Activated CD4-positive, alpha-beta T cell treated with anti-CD3 and anti-CD28 coated beads for 36 hours (primary cell): ENCODE measurements at regions of chr4 and their contacts with region 1.

Region 1: DNA sequence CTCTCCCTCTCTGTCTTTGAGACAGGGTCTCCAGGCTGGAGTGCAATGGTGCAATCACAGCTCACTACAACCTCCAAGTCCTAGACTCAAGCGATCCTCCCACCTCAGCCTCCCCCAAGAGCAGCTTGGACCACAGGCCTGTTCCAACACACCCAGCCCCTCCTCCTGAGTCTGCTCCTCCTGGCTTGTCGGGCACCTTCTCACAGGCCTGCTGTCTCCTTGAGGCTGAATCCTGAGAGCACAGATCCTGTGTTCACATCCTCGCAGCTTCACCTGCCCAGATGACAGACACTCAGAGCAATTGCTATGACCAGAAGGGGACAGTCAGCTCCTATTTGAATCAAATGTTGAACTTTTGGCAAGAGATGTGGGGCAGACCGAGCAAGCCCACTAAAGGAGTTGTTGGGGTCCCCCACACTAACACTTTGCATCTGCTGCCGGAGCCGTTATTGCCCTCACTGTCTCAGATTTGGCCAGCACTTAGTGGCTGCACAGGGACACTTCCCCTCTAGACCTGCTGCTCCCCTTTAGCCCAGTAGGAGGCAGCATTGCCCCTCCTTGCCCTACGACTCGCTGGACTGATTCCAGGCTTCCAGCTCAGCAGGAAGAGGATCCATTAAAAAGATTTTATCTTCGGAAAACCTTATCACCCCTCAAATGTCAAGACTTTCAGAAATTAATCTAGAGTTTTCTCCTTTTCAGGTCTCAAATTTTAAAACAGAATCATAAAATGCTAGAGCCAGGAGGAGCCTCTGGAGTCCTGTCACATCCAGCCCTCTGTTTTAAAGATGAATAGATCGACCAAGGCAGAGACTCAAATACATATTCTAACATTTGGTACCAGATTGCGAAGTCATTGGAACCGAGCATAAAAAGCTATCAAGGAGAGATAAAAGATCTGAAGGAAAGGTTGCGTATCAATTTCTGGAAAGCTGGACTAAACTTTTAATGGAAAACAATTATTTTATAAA is 113.7 kb downstream of the USP46 start:
- DNase-seq: peak; percentile 76
- ATAC-seq: peak; percentile 61
- H3K4me3 Mint-ChIP-seq: no peak overlapping the region
- H3K27ac Mint-ChIP-seq: no peak overlapping the region
- H3K4me1 Mint-ChIP-seq: peaks cover 2% of the 10 kb centered on the region
- H3K27me3 Mint-ChIP-seq: peaks cover 2% of the 10 kb centered on the region

Region 2: GRCh38 chr4:52376132-52376704 is 169.2 kb before region 1 on chr4:
- CTCF ChIA-PET with region 1: interaction called, 3 read pairs
- POLR2A ChIA-PET with region 1: no interaction called
- intact Hi-C with region 1: loop called in 1 of 2 experiments (anchors 10 kb)
- DNase-seq: peak; percentile 13
- ATAC-seq: no peak
- H3K4me3 Mint-ChIP-seq: no peak overlapping the region
- H3K27ac Mint-ChIP-seq: no peak overlapping the region
- H3K4me1 Mint-ChIP-seq: no peaks in the 10 kb centered on the region
- H3K27me3 Mint-ChIP-seq: peaks cover 13% of the 10 kb centered on the region

Region 3: DNA sequence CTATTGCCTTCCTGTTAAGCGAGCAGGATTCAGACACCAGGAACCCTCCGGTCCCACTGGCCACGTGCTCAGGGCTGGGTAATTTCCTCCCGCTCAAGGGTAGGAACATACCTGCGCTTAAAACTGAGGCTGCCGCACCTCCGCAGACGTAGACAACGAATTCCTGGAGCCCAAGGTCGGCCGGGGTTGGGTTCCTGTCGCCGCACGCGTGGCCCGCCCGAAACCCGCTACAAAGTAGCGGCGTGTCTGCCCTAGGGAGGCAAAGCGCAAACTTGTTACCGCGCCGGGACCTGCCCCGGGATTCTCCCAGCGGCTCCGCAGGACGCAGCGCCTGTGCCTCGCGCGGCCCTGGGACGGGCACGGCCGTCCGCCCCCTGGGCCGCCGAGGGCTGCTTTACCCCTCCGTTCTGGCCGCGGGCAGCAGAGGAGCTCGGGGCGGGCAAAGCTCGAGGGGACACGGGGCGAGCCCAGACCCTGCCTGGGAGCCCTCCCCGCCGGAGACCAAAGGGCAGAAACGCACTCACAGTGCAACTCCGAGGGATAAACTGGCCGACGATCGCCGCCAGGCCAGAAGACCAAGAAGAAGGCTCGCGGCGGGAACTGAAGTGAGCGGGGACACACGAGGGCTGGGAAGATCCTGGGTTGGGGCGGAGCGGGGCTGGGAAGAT is 205.6 kb after region 1 on chr4 and contains the start of gene ERVMER34-1:
- CTCF ChIA-PET with region 1: interaction called, 3 read pairs
- POLR2A ChIA-PET with region 1: no interaction called
- intact Hi-C with region 1: loop called in 1 of 2 experiments (anchors 10 kb)
- DNase-seq: peak; percentile 31
- ATAC-seq: peak; percentile 47
- H3K4me3 Mint-ChIP-seq: peak within 1 kb of the TSS; percentile 61
- H3K27ac Mint-ChIP-seq: no peak within 1 kb of the TSS
- H3K4me1 Mint-ChIP-seq: peaks cover 5% of the 10 kb centered on the region
- H3K27me3 Mint-ChIP-seq: peaks cover 47% of the 10 kb centered on the region
- total RNA-seq, gene ERVMER34-1: 0.14 to 0.67 TPM

Region 4: GRCh38 chr4:52907510-52907909 is 362.1 kb after region 1 on chr4:
- CTCF ChIA-PET with region 1: no interaction called
- POLR2A ChIA-PET with region 1: no interaction called
- intact Hi-C with region 1: no loop called
- DNase-seq: no peak
- ATAC-seq: no peak
- H3K4me3 Mint-ChIP-seq: no peak overlapping the region
- H3K27ac Mint-ChIP-seq: no peak overlapping the region
- H3K4me1 Mint-ChIP-seq: peaks cover under 1% of the 10 kb centered on the region
- H3K27me3 Mint-ChIP-seq: no peaks in the 10 kb centered on the region